PC-3 (cell line): ENCODE measurements at regions of chr17 and their contacts with region 1.

Region 1: GRCh38 chr17:61946359-61946758 is 18.6 kb upstream of the INTS2 start:
- DNase-seq: no peak
- ATAC-seq: peak; percentile 32; the same call in 1 of the 2 replicates
- H3K4me3 ChIP-seq: no peak overlapping the region
- H3K27ac ChIP-seq: no peak overlapping the region
- H3K4me1 ChIP-seq: peaks cover 13% of the 10 kb centered on the region
- H3K27me3 ChIP-seq: no peaks in the 10 kb centered on the region
- CTCF ChIP-seq: no peak

Region 2: GRCh38 chr17:62179534-62180151 is 233.3 kb after region 1 on chr17:
- CTCF ChIA-PET with region 1: no interaction called
- POLR2A ChIA-PET with region 1: no interaction called
- intact Hi-C with region 1: loop called (anchors 10 kb)
- DNase-seq: peak; percentile 95
- ATAC-seq: peak; percentile 99
- H3K4me3 ChIP-seq: no peak overlapping the region
- H3K27ac ChIP-seq: peak overlapping the region; percentile 31
- H3K4me1 ChIP-seq: peaks cover 19% of the 10 kb centered on the region
- H3K27me3 ChIP-seq: no peaks in the 10 kb centered on the region
- CTCF ChIP-seq: peak; percentile 86